Activated CD4-positive, alpha-beta T cell treated with anti-CD3 and anti-CD28 coated beads for 36 hours (primary cell): ENCODE measurements at regions of chr9 and their contacts with region 1.

Region 1: DNA sequence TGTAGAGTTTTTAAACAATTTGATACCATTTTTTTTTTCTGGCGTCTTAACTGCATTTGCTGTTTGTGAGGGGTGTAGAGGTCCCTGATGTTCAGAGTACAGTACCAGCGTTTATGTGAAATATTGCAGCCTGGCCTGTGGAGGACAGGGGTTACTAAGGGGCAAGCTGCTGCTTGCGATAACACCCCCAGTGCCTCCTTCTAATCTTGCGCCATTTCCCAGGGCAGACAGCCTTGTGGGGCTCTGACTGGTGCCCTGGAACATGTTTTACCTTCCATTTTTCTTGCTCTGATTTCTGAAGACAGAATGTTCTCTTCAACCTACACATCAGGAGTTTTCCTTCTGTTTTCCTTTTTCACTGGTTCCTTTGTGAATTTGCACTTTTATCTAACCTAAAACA is 142.9 kb downstream of the DOCK8 start:
- DNase-seq: no peak
- ATAC-seq: no peak
- H3K4me3 Mint-ChIP-seq: no peak overlapping the region
- H3K27ac Mint-ChIP-seq: no peak overlapping the region
- H3K4me1 Mint-ChIP-seq: peaks cover 2% of the 10 kb centered on the region
- H3K27me3 Mint-ChIP-seq: no peaks in the 10 kb centered on the region

Region 2: DNA sequence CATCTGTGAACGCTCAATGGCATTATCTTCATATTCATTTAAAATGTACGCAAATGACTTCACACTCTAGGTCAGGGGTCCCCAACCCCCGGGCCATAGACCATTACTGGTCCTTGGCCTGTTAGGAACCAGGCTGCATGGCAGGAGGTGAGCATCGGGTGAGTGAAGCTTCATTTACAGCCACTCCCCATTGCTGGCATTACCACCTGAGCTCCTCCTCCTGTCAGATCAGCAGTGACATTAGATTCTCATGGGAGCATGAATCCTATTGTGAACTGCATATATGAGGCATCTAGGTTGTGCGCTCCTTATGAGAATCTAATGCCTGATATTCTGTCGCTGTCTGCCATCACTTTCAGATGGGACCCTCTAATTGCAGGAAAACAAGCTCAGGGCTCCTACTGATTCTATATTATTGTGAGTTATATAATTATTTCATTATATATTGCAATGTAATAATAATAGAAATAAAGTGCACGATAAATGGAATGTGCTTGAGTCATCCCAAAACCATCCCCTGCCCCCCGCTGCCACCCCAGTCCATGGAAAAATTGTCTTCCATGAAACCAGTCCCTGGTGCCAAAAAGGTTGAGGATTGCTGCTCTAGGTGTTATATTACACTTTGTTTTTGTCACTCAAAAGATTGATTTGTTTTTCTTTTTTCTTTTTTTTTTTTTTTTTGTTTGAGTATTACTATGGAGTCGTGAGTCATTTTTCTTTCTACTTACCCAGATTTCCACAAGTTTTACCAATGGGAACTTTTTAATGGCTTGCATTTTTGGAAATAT is 15.7 kb before region 1 on chr9:
- CTCF ChIA-PET with region 1: interaction called, 4 read pairs
- POLR2A ChIA-PET with region 1: no interaction called
- intact Hi-C with region 1: loop called in 1 of 2 experiments (anchors 2 kb)
- DNase-seq: no peak
- ATAC-seq: no peak
- H3K4me3 Mint-ChIP-seq: no peak overlapping the region
- H3K27ac Mint-ChIP-seq: no peak overlapping the region
- H3K4me1 Mint-ChIP-seq: no peaks in the 10 kb centered on the region
- H3K27me3 Mint-ChIP-seq: no peaks in the 10 kb centered on the region